ENCODE measurements at regions of chr2 and their contacts with region 1.

Region 1: DNA sequence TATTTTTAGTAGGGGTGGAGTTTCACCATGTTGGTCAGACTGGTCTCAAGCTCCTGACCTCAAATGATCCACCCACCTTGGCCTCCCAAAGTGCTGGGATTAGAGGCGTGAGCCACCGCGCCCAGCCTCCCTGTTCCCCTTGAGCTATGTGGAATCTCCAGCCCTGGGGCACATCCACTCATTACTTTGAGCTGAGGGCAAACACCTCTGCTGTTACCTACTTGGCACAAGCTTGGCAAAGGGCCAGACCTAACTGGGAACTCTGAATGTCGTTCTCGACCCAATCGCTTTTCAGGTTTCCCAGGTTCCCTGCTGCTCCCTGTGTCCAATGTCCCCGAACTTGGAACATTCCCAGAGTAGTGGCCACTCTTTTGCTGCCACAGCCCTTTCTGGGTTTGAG is 40.6 kb downstream of the CHST10 start:
- DNase-seq: no peak
- H3K4me3 ChIP-seq: no peak overlapping the region
- H3K4me3 Mint-ChIP-seq: no peak overlapping the region
- H3K27ac ChIP-seq: no peak overlapping the region
- H3K27ac Mint-ChIP-seq: no peak overlapping the region
- H3K4me1 ChIP-seq: peaks cover 0 to 4% of the 10 kb centered on the region in 2 donors
- H3K4me1 Mint-ChIP-seq: peaks cover 9% of the 10 kb centered on the region
- H3K27me3 ChIP-seq: peaks cover 0 to 3% of the 10 kb centered on the region in 2 donors
- H3K27me3 Mint-ChIP-seq: peaks cover 0 to 6% (median 3%) of the 10 kb centered on the region in 3 donors
- CTCF ChIP-seq: no peak

Region 2: GRCh38 chr2:100262555-100263320 is 114.1 kb before region 1 on chr2:
- intact Hi-C with region 1: loop called in 1 of 2 experiments (anchors 10 kb)
- DNase-seq: peak; percentile 36 to 57 (median 55)
- H3K4me3 ChIP-seq: peak overlapping the region in 1 of 3 experiments; percentile 30
- H3K4me3 Mint-ChIP-seq: no peak overlapping the region
- H3K27ac ChIP-seq: no peak overlapping the region
- H3K27ac Mint-ChIP-seq: peak overlapping the region in 1 of 7 donors; percentile 2
- H3K4me1 ChIP-seq: peaks cover 22 to 23% of the 10 kb centered on the region in 2 donors
- H3K4me1 Mint-ChIP-seq: peaks cover 25% of the 10 kb centered on the region
- H3K27me3 ChIP-seq: no peaks in the 10 kb centered on the region
- H3K27me3 Mint-ChIP-seq: peaks cover 0 to 3% (median 2%) of the 10 kb centered on the region in 3 donors
- CTCF ChIP-seq: peak; percentile 99

Region 3: GRCh38 chr2:100339823-100340222 is 37.0 kb before region 1 on chr2:
- intact Hi-C with region 1: loop called in 1 of 2 experiments (anchors 2 kb)
- DNase-seq: no peak
- H3K4me3 ChIP-seq: no peak overlapping the region
- H3K4me3 Mint-ChIP-seq: no peak overlapping the region
- H3K27ac ChIP-seq: no peak overlapping the region
- H3K27ac Mint-ChIP-seq: no peak overlapping the region
- H3K4me1 ChIP-seq: no peaks in the 10 kb centered on the region
- H3K4me1 Mint-ChIP-seq: no peaks in the 10 kb centered on the region
- H3K27me3 ChIP-seq: peaks cover 2 to 4% of the 10 kb centered on the region in 2 donors
- H3K27me3 Mint-ChIP-seq: peaks cover 3 to 22% (median 16%) of the 10 kb centered on the region in 3 donors
- CTCF ChIP-seq: no peak

Region 4: DNA sequence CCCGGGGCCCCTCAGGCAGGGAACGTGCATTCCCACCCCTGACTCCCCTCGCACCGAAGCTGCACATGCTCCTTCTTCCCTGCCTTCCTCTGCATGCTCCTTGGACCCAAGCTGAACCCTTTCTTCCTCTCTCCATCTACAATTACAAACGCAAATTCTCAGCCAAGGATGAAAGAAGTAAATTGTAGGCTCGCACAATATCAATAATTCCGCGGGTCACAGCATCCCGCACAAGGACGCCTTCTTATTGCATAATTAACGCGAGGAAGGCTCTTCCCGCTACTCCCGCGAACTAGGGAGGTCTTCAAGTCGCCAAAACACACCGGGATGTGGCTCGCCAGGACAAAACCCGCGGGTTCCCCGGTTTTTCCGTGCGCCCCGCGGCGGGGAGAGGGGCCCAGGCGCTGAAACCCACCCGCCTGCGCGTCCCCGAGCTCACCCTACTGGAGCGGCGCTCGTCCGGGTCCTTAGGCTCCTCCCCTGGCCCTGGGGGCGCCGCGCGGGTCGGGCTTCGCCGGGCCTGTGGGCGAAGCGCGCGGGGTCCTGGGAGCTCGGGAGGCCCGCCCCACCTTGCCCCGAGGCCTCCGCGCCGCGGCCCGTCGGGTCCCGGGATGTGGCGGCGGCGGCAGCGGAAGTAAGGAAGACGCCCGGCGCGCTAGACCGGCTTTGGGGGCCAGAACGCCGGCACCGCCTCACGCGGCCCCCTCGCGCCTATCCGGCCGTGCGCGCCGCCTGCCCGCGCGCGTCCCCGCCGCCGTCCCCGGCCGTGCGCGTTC is 40.3 kb after region 1 on chr2 and contains the start of gene CHST10:
- intact Hi-C with region 1: no loop called
- DNase-seq: peak in 2 of 3 donors; percentile 20 to 27
- H3K4me3 ChIP-seq: peak within 1 kb of the TSS; percentile 52 to 80 (median 76)
- H3K4me3 Mint-ChIP-seq: peak within 1 kb of the TSS; percentile 83 to 96
- H3K27ac ChIP-seq: no peak within 1 kb of the TSS
- H3K27ac Mint-ChIP-seq: peak within 1 kb of the TSS in 5 of 7 donors; percentile 2 to 58 (median 53)
- H3K4me1 ChIP-seq: peaks cover 37 to 38% of the 10 kb centered on the region in 2 donors
- H3K4me1 Mint-ChIP-seq: peaks cover 35% of the 10 kb centered on the region
- H3K27me3 ChIP-seq: no peaks in the 10 kb centered on the region
- H3K27me3 Mint-ChIP-seq: peaks cover 11% of the 10 kb centered on the region in 3 donors
- CTCF ChIP-seq: no peak
- polyA plus RNA-seq, gene CHST10: 0.52 to 0.54 TPM in 2 of 3 donors, not detected in the other

Region 5: DNA sequence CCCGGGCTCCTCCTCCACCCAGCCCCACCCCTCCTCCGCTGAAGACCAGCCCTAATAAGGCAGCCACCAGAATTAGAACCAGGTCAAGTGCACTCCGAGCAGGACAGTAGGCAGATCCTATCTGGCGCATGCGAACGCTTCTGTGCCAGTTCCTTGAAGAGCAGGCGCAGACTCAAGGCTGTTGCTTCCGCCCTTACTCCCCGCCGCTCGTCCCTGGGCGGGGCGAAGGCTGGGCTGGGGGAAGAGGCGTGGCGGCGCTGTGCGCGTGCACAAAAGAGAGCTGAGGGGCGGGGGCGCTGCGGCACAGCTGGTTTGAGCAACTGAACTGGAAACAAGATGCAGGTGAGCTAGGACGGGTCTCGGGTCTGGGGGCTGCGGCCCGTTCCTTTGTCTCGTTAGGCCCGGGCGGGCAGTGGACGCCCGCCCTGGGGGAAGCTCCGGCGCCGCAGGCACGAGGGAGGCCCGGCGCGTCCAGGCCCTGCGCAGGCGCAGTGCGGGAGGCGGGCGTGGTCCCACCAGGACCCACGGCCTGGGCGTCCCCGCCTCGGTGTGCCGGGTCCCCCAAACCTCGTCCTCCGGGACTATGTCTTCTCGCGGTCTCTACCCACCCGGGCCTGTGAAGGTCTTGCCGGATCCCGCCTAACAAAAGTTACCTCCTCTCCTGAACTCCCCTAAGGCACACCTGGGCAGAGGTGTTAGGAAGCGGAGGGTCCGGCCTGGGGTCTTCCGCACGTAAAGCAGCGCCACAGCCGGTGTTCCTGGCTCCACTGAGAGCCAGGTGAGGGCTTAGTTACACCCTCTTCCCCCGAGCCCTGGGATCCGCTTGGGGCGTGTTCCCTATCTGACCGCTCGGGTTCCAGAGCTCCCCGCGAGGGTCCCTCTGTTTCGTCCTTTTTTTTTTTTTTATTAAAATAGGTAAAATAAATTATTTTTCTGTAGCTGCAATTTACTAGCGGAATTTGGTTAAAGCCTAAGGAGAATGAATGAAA is 186.2 kb after region 1 on chr2 and contains the start of gene PDCL3:
- intact Hi-C with region 1: no loop called
- DNase-seq: peak; percentile 95 to 100 (median 97)
- H3K4me3 ChIP-seq: peak within 1 kb of the TSS; percentile 72 to 95 (median 88)
- H3K4me3 Mint-ChIP-seq: peak within 1 kb of the TSS; percentile 86 to 92
- H3K27ac ChIP-seq: peak within 1 kb of the TSS; percentile 87 to 92
- H3K27ac Mint-ChIP-seq: peak within 1 kb of the TSS; percentile 90 to 97 (median 96)
- H3K4me1 ChIP-seq: peaks cover 15 to 25% of the 10 kb centered on the region in 2 donors
- H3K4me1 Mint-ChIP-seq: peaks cover 23% of the 10 kb centered on the region
- H3K27me3 ChIP-seq: no peaks in the 10 kb centered on the region
- H3K27me3 Mint-ChIP-seq: peaks cover 0 to 2% (median 0%) of the 10 kb centered on the region in 3 donors
- CTCF ChIP-seq: no peak
- polyA plus RNA-seq, gene PDCL3: 15.9 to 28.4 (median 24.8) TPM

Measured in CD14-positive monocyte (primary cell).